ENCODE measurements at regions of chr3 and their contacts with region 1.

Region 1: DNA sequence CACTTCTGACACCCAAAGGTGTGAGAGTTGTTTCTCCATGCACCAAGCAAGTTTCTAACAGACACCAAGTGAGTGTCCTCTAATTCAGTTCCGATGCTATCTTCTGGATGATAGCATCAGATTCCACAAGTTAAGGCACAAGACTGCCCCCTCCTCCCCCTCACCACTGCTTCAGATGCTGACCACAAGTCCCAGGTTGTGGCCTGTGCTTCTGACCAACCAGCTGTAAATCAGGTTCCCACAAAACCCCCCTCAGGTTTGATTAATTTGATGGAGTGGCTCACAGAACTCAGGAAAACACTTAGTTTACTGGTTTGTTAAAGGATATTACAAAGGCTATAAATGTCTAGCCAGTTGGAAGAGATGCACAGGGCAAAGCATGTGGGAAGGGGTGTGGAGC is 7.0 kb upstream of the PLA1A start:
- DNase-seq: no peak
- H3K4me3 ChIP-seq: no peak overlapping the region
- H3K27ac ChIP-seq: no peak overlapping the region
- H3K4me1 ChIP-seq: peaks cover 0 to 37% (median 7%) of the 10 kb centered on the region in 4 experiments
- H3K27me3 ChIP-seq: no peaks in the 10 kb centered on the region

Region 2: GRCh38 chr3:119553823-119554415 is 36.8 kb before region 1 on chr3:
- CTCF ChIA-PET with region 1: no interaction called
- POLR2A ChIA-PET with region 1: no interaction called
- DNase-seq: no peak
- H3K4me3 ChIP-seq: no peak overlapping the region
- H3K27ac ChIP-seq: no peak overlapping the region
- H3K4me1 ChIP-seq: peaks cover 0 to 24% (median 17%) of the 10 kb centered on the region in 4 experiments
- H3K27me3 ChIP-seq: no peaks in the 10 kb centered on the region

Region 3: GRCh38 chr3:119579366-119580165 is 11.1 kb before region 1 on chr3 and contains the start of gene ADPRH:
- CTCF ChIA-PET with region 1: interaction called, 17 read pairs
- POLR2A ChIA-PET with region 1: no interaction called
- DNase-seq: peak; percentile 46 to 76 (median 63)
- H3K4me3 ChIP-seq: peak within 1 kb of the TSS; percentile 64 to 85 (median 76)
- H3K27ac ChIP-seq: peak within 1 kb of the TSS; percentile 64 to 82
- H3K4me1 ChIP-seq: peaks cover 0 to 13% (median 11%) of the 10 kb centered on the region in 4 experiments
- H3K27me3 ChIP-seq: no peaks in the 10 kb centered on the region